Breast epithelium (tissue), 4 donors: ENCODE measurements at regions of chr1 and their contacts with region 1.

Region 1: GRCh38 chr1:182367926-182368325 is 23.7 kb downstream of the GLUL start:
- DNase-seq: no peak
- H3K4me3 ChIP-seq: no peak overlapping the region
- H3K27ac ChIP-seq: peak overlapping the region in 1 of 2 donors; percentile 32
- H3K4me1 ChIP-seq: no peaks in the 10 kb centered on the region
- H3K27me3 ChIP-seq: no peaks in the 10 kb centered on the region
- CTCF ChIP-seq: no peak
- POLR2A ChIP-seq: no peak

Region 2: DNA sequence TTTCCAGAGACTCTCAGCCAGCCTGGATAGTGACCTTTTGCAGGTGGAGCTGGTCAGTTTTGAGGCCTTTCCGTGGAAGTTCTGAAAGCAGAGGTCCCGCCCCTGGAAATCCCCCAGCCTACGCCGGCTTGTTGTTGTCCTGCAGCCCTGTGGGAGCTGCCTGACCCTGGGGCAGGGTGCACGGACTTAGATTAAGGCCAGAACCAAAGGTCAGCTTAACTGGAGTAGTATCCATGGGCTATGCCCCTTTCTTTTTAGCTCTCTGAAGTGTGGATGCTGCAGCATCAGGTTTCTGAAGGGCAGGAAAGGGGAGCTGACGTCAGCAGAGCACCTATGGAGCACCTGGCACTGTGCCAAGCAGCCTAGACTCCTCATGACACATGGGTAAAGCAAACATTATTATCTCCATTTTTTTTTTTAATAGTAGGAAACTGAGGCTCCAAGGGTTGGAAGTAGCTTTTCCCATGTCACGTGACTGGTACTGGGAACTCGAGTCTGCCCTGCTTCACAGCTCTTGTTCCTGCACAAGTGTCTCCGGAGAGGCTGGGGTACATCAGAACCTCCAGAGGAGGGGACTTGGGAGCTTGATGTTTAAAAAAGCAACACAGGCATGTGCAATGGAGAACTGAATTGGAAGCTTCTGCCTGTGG is 1240.9 kb before region 1 on chr1:
- intact Hi-C with region 1: no loop called
- DNase-seq: no peak
- H3K4me3 ChIP-seq: no peak overlapping the region
- H3K27ac ChIP-seq: peak overlapping the region in 1 of 2 donors; percentile 14
- H3K4me1 ChIP-seq: peaks cover 0 to 3% of the 10 kb centered on the region in 2 donors
- H3K27me3 ChIP-seq: no peaks in the 10 kb centered on the region
- CTCF ChIP-seq: no peak
- POLR2A ChIP-seq: no peak

Region 3: GRCh38 chr1:182995894-182996293 is 628.0 kb after region 1 on chr1:
- intact Hi-C with region 1: loop called (anchors 5 kb)
- DNase-seq: no peak
- H3K4me3 ChIP-seq: no peak overlapping the region
- H3K27ac ChIP-seq: no peak overlapping the region
- H3K4me1 ChIP-seq: no peaks in the 10 kb centered on the region
- H3K27me3 ChIP-seq: no peaks in the 10 kb centered on the region
- CTCF ChIP-seq: no peak
- POLR2A ChIP-seq: no peak